ENCODE measurements at regions of chr16 and their contacts with region 1.

Region 1: DNA sequence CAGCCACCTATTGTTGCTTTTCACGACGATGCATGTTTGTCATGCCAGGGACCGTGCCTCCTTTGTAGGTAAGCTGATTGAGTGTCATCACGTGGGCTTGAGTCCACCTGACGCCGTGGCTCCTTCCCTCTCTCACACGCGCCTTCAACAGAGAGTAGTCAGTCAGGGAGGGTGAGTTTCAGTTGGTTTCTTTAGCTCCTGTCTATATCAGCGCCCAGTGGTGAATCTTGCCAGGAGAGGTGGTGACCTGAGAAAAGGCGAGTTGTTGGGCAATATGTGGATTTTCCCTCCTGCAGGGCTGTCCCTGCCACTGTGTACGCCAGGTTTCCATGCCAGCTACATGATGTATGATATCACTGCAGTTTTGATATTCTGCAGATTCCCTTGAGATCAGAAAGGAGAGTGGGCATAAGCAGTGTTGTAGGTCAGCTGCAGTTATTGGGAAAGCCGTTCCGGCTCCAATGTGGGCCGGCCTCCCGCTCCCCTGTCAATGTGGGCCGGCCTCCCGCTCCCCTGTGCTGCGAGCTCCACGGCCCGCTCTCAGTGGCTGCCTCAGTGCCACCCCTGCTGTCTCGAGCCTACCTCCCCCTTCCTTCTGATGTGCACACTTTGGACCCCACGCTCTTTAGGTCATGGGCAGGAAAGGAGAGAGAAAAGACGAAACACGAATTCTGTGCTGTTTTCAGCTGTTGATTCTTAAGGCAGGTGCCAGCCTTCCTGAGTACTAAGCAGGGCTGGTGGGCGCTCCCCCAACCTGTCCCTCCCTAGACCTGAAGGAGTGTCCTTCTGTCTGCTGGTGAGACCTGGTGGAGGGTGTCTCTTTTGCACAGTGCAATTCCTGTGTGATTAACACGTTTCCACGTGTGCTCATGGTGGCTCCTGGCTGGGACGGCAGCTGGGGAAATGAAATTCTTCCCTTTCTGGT is 31.5 kb downstream of the BANP start:
- DNase-seq: no peak
- H3K4me3 Mint-ChIP-seq: no peak overlapping the region
- H3K27ac Mint-ChIP-seq: peak overlapping the region; percentile 80
- H3K4me1 Mint-ChIP-seq: peaks cover 48% of the 10 kb centered on the region
- H3K27me3 Mint-ChIP-seq: no peaks in the 10 kb centered on the region

Region 2: GRCh38 chr16:87950765-87951549 is 31.8 kb before region 1 on chr16 and contains the start of gene BANP:
- CTCF ChIA-PET with region 1: no interaction called
- intact Hi-C with region 1: loop called (anchors 5 kb)
- DNase-seq: peak; percentile 98
- H3K4me3 Mint-ChIP-seq: peak within 1 kb of the TSS; percentile 85
- H3K27ac Mint-ChIP-seq: peak within 1 kb of the TSS; percentile 99
- H3K4me1 Mint-ChIP-seq: peaks cover 41% of the 10 kb centered on the region
- H3K27me3 Mint-ChIP-seq: no peaks in the 10 kb centered on the region
- total RNA-seq, gene BANP: 35.1 to 38.6 TPM

Region 3: DNA sequence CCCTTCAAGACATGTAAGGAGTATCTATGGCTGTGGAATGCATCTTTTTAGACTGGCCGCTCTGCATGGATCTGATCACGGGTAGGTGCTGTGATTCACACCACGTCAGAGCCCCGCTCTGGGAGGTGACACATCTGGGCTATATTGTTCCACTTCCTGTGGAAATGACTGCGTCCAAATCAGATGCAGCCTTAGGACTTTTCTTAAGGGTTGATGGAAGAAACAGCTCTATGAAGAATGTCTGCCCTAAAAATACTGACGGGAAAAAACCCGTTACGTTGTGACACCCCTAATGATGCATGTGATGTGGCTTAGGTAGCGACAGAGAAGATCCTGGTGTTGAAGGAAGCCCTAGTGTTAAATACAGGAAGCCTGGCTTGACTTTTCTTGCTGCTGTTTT is 19.4 kb before region 1 on chr16:
- CTCF ChIA-PET with region 1: no interaction called
- intact Hi-C with region 1: loop called (anchors 1 kb)
- DNase-seq: peak; percentile 92
- H3K4me3 Mint-ChIP-seq: peak overlapping the region; percentile 29
- H3K27ac Mint-ChIP-seq: peak overlapping the region; percentile 86
- H3K4me1 Mint-ChIP-seq: peaks cover 80% of the 10 kb centered on the region
- H3K27me3 Mint-ChIP-seq: no peaks in the 10 kb centered on the region

Measured in activated naive CD4-positive, alpha-beta T cell treated with anti-CD3 and anti-CD28 coated beads for 36 hours (primary cell).